ENCODE measurements at regions of chrX and their contacts with region 1.

Region 1: GRCh38 chrX:47361538-47362511 is 8.6 kb upstream of the ZNF157 start:
- DNase-seq: peak in 8 of 9 experiments; percentile 5 to 83 (median 28)
- ATAC-seq: peak; percentile 55
- H3K4me3 ChIP-seq: peak overlapping the region in 1 of 2 experiments; percentile 20
- H3K4me3 Mint-ChIP-seq: peak overlapping the region; percentile 58
- H3K27ac ChIP-seq: peak overlapping the region in 1 of 2 experiments; percentile 83
- H3K27ac Mint-ChIP-seq: peak overlapping the region; percentile 85
- H3K4me1 ChIP-seq: peaks cover 20% of the 10 kb centered on the region
- H3K4me1 Mint-ChIP-seq: peaks cover 33% of the 10 kb centered on the region
- H3K27me3 ChIP-seq: no peaks in the 10 kb centered on the region
- H3K27me3 Mint-ChIP-seq: no peaks in the 10 kb centered on the region
- CTCF ChIP-seq: no peak

Region 2: GRCh38 chrX:47217642-47218279 is 144.1 kb before region 1 on chrX:
- CTCF ChIA-PET with region 1: no interaction called
- POLR2A ChIA-PET with region 1: no interaction called
- intact Hi-C with region 1: loop called in 1 of 2 experiments (anchors 5 kb)
- DNase-seq: peak; percentile 83 to 98 (median 96)
- ATAC-seq: peak; percentile 80
- H3K4me3 ChIP-seq: peak overlapping the region; percentile 79
- H3K4me3 Mint-ChIP-seq: peak overlapping the region; percentile 93
- H3K27ac ChIP-seq: peak overlapping the region; percentile 98 to 100
- H3K27ac Mint-ChIP-seq: peak overlapping the region; percentile 98
- H3K4me1 ChIP-seq: peaks cover 26% of the 10 kb centered on the region
- H3K4me1 Mint-ChIP-seq: peaks cover 35% of the 10 kb centered on the region
- H3K27me3 ChIP-seq: no peaks in the 10 kb centered on the region
- H3K27me3 Mint-ChIP-seq: no peaks in the 10 kb centered on the region
- CTCF ChIP-seq: no peak

Region 3: DNA sequence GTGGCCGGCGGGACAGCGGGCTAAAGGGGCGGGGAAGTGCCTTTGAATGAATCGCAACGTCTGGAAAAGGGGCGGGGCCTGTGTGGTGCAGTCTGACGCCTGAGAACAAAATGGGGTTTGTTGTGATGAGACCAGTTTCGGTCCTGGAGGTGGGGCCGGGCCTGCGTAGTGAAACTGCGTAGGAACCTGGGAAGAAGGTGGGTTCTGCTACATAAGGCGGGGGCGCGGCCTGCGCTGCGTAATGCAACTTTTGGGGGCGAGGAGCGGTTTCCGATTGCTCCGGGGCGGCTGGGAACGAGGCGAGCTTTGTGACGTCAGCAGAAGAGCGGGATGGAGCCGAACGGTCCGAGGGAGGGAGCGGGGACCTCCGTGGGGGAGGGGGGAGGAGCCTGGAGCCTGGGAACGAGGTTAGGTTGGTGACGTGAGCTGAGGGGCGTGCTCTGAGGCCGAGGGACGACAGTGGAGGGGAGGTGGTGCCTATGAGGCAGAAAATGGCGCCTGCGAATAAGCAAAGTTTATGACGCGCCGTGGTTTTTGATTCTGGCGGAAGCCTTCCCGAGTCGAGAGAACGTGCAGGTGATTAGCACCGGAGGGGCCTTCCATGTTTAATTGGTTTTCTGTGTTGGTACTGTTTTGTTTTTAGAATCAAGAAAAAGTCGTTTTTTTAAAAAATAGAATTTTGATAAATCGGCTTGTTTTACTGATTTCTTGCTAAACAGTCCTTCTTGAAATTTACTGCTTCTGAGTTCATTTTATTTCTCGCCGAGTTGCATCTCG is 128.3 kb before region 1 on chrX:
- CTCF ChIA-PET with region 1: no interaction called
- POLR2A ChIA-PET with region 1: interaction called, 4 read pairs
- intact Hi-C with region 1: loop called in 1 of 2 experiments (anchors 1 kb)
- DNase-seq: peak; percentile 81 to 98 (median 95)
- ATAC-seq: peak; percentile 89
- H3K4me3 ChIP-seq: peak overlapping the region; percentile 77 to 96
- H3K4me3 Mint-ChIP-seq: peak overlapping the region; percentile 96
- H3K27ac ChIP-seq: peak overlapping the region; percentile 100
- H3K27ac Mint-ChIP-seq: peak overlapping the region; percentile 99
- H3K4me1 ChIP-seq: peaks cover 34% of the 10 kb centered on the region
- H3K4me1 Mint-ChIP-seq: peaks cover 40% of the 10 kb centered on the region
- H3K27me3 ChIP-seq: no peaks in the 10 kb centered on the region
- H3K27me3 Mint-ChIP-seq: no peaks in the 10 kb centered on the region
- CTCF ChIP-seq: no peak

Region 4: DNA sequence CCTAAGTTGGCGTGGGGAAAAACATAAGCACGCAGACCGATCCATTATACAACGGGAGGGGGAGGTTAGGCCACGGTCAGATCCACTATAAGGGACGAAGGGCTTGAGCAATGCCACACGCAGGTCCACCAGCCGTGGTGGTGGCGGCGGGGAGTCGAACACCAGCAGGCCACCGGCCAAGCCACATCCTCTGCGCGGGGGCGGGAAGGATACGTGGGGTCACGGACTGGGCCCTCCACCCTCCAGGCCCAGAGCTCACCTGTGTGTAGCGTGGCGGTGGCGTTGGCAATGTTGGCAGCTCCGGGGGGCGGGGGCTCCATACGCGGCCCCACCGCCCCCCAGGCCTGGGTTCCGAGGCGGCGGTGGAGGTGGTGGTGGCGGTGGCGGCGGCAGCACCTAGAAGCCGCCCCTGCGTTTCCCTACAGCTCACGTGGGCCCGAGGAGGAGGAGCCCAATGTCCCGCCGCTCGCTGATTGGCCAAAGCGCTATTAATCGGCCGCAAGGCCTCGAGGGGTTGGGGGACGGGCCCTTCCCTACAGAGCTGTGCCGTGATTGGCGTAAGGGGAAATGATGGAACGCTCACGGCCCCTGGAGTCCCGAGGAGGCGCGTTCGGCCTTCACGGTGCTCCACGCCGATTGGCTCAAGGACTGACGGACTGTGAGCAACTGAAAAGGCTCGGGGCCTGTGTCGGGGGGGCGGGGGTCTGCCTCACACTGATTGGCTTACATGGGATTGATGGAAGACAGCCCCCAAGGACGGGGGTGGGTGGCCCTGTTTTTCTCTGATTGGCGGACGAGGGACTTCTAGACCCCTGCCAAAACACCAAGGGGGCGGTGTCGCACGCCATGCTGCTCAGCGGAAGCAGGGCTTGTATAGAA is 288.6 kb after region 1 on chrX and contains the start of gene ELK1:
- CTCF ChIA-PET with region 1: no interaction called
- POLR2A ChIA-PET with region 1: no interaction called
- intact Hi-C with region 1: loop called in 1 of 2 experiments (anchors 5 kb)
- DNase-seq: peak; percentile 75 to 96 (median 87)
- ATAC-seq: peak; percentile 89
- H3K4me3 ChIP-seq: peak within 1 kb of the TSS; percentile 63 to 69
- H3K4me3 Mint-ChIP-seq: peak within 1 kb of the TSS; percentile 91
- H3K27ac ChIP-seq: peak within 1 kb of the TSS; percentile 61 to 70
- H3K27ac Mint-ChIP-seq: peak within 1 kb of the TSS; percentile 93
- H3K4me1 ChIP-seq: peaks cover 25% of the 10 kb centered on the region
- H3K4me1 Mint-ChIP-seq: peaks cover 44% of the 10 kb centered on the region
- H3K27me3 ChIP-seq: no peaks in the 10 kb centered on the region
- H3K27me3 Mint-ChIP-seq: no peaks in the 10 kb centered on the region
- CTCF ChIP-seq: no peak
- total RNA-seq, gene ELK1: 33.6 to 41.2 TPM